ENCODE measurements at regions of chr7 and their contacts with region 1.

Region 1: GRCh38 chr7:105224884-105225651 is 163.7 kb downstream of the SRPK2 start:
- DNase-seq: peak; percentile 42
- ATAC-seq: peak; percentile 97
- H3K4me3 ChIP-seq: peak overlapping the region; percentile 11; the same call in 1 of the 2 replicates
- H3K27ac ChIP-seq: 0 out of 2 replicates have a peak overlapping the region, but pooled peaks have one; percentile 5
- H3K4me1 ChIP-seq: peaks cover 5% of the 10 kb centered on the region
- H3K27me3 ChIP-seq: no peaks in the 10 kb centered on the region
- CTCF ChIP-seq: no peak
- EP300 ChIP-seq: no peak; a peak in 1 of 4 replicates
- POLR2A ChIP-seq: no peak
- RAD21 ChIP-seq: no peak

Region 2: GRCh38 chr7:104895522-104896236 is 329.4 kb before region 1 on chr7:
- CTCF ChIA-PET with region 1: no interaction called
- POLR2A ChIA-PET with region 1: no interaction called
- RAD21 ChIA-PET with region 1: no interaction called
- SMC1A ChIA-PET with region 1: no interaction called
- in situ Hi-C with region 1: no loop called
- intact Hi-C with region 1: no loop called
- DNase-seq: peak; percentile 83
- ATAC-seq: peak; percentile 55
- H3K4me3 ChIP-seq: peak overlapping the region; percentile 69
- H3K27ac ChIP-seq: peak overlapping the region; percentile 97
- H3K4me1 ChIP-seq: peaks cover 69% of the 10 kb centered on the region
- H3K27me3 ChIP-seq: no peaks in the 10 kb centered on the region
- CTCF ChIP-seq: no peak
- EP300 ChIP-seq: peak; percentile 58 to 60; a peak in 1 of 4 replicates
- POLR2A ChIP-seq: no peak
- RAD21 ChIP-seq: no peak

Region 3: GRCh38 chr7:105210721-105211205 is 14.3 kb before region 1 on chr7:
- CTCF ChIA-PET with region 1: interaction called, 4 read pairs
- POLR2A ChIA-PET with region 1: interaction called, 4 read pairs
- RAD21 ChIA-PET with region 1: interaction called, 13 read pairs
- SMC1A ChIA-PET with region 1: interaction called, 23 read pairs
- in situ Hi-C with region 1: no loop called
- intact Hi-C with region 1: loop called (anchors 2 kb)
- DNase-seq: peak; percentile 66
- ATAC-seq: peak; percentile 93
- H3K4me3 ChIP-seq: peak overlapping the region; percentile 45; the same call in 1 of the 2 replicates
- H3K27ac ChIP-seq: peak overlapping the region; percentile 9
- H3K4me1 ChIP-seq: peaks cover 22% of the 10 kb centered on the region
- H3K27me3 ChIP-seq: no peaks in the 10 kb centered on the region
- CTCF ChIP-seq: no peak
- EP300 ChIP-seq: no peak
- POLR2A ChIP-seq: no peak
- RAD21 ChIP-seq: no peak

Measured in GM12878 (cell line).